Esophagus muscularis mucosa (tissue), 4 donors: ENCODE measurements at regions of chr2 and their contacts with region 1.

Region 1: DNA sequence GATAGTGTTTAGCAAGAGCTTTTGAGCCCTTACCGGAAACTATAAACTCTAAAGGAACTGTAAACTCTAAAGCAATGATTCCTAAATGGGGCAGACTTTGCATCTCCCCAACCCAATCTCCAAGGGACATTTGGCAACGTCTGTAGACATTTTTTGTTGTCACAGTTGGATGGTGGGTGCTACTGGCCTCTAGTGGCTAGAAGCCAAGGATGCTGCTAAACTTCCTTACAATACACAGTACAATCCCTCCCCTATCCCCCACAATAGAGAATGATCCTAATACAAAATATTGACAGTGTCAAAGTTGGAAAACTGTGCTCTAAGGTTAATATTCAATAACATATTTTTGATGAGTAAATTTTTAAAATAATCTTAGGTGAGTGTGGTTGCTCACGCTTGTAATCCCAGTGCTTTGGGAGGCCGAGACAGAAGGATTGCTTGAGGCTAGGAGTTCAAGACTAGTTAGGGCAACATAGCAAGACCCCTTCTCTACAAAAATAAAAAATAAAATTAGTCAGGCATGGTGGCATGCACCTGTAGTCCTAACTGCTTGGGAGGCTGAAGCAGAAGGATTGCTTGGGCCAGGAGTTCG is 66.7 kb downstream of the PTPN4 start:
- DNase-seq: no peak
- H3K4me3 ChIP-seq: no peak overlapping the region
- H3K27ac ChIP-seq: no peak overlapping the region
- H3K4me1 ChIP-seq: peaks cover 0 to 7% (median 2%) of the 10 kb centered on the region in 4 donors
- H3K27me3 ChIP-seq: no peaks in the 10 kb centered on the region
- CTCF ChIP-seq: peak; percentile 27 to 36 (median 30)
- EP300 ChIP-seq: no peak
- POLR2A ChIP-seq: no peak

Region 2: GRCh38 chr2:119702918-119703401 is 123.5 kb before region 1 on chr2:
- intact Hi-C with region 1: loop called (anchors 2 kb)
- DNase-seq: no peak
- H3K4me3 ChIP-seq: no peak overlapping the region
- H3K27ac ChIP-seq: no peak overlapping the region
- H3K4me1 ChIP-seq: peaks cover 0 to 7% (median 2%) of the 10 kb centered on the region in 4 donors
- H3K27me3 ChIP-seq: no peaks in the 10 kb centered on the region
- CTCF ChIP-seq: peak; percentile 89 to 97 (median 91)
- EP300 ChIP-seq: no peak
- POLR2A ChIP-seq: no peak

Region 3: GRCh38 chr2:119753041-119753929 is 73.2 kb before region 1 on chr2:
- intact Hi-C with region 1: loop called (anchors 2 kb)
- DNase-seq: no peak
- H3K4me3 ChIP-seq: no peak overlapping the region
- H3K27ac ChIP-seq: no peak overlapping the region
- H3K4me1 ChIP-seq: no peaks in the 10 kb centered on the region
- H3K27me3 ChIP-seq: no peaks in the 10 kb centered on the region
- CTCF ChIP-seq: peak; percentile 60 to 75 (median 60)
- EP300 ChIP-seq: no peak
- POLR2A ChIP-seq: no peak

Region 4: DNA sequence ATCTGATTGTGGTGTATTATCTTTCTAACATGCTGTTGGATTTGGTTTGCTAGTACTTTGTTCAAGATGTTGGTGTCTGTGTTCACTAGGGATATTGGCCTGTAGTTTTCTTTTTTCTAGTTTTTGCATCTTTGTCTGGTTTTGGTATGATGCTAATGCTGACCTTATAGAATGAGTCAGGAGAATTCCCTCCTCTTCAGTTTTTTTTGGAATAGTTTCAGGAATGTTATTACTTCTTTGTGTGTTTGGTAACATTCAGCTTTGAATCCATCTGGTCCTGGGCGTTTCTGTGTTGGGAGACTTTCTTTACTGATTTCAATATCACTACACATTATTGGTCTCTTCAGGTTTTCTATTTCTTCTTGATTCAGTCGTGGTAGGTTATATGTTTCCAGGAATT is 62.2 kb after region 1 on chr2:
- intact Hi-C with region 1: no loop called
- DNase-seq: no peak
- H3K4me3 ChIP-seq: no peak overlapping the region
- H3K27ac ChIP-seq: no peak overlapping the region
- H3K4me1 ChIP-seq: no peaks in the 10 kb centered on the region
- H3K27me3 ChIP-seq: no peaks in the 10 kb centered on the region
- CTCF ChIP-seq: no peak
- EP300 ChIP-seq: no peak
- POLR2A ChIP-seq: no peak